ENCODE measurements at regions of chr2 and their contacts with region 1.

Region 1: DNA sequence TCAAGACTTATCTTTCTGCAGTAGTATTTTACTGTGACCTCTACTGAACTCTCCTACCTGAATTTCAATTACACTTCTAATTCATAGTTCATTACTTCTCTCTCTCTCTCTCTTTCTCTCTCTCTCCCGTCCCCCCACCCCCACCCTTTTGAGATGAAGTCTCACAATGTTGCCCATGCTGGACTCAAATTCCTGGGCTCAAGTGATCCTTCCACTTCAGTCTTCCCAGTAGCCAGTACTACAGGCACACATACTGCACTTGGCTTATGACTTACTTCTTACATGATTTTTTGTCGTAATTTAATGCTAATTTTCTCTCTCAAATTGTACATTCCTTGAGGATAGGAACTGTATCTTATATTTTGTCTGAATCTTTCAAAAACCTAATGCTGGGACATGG is 6.0 kb upstream of the HIBCH start:
- DNase-seq: no peak

Region 2: DNA sequence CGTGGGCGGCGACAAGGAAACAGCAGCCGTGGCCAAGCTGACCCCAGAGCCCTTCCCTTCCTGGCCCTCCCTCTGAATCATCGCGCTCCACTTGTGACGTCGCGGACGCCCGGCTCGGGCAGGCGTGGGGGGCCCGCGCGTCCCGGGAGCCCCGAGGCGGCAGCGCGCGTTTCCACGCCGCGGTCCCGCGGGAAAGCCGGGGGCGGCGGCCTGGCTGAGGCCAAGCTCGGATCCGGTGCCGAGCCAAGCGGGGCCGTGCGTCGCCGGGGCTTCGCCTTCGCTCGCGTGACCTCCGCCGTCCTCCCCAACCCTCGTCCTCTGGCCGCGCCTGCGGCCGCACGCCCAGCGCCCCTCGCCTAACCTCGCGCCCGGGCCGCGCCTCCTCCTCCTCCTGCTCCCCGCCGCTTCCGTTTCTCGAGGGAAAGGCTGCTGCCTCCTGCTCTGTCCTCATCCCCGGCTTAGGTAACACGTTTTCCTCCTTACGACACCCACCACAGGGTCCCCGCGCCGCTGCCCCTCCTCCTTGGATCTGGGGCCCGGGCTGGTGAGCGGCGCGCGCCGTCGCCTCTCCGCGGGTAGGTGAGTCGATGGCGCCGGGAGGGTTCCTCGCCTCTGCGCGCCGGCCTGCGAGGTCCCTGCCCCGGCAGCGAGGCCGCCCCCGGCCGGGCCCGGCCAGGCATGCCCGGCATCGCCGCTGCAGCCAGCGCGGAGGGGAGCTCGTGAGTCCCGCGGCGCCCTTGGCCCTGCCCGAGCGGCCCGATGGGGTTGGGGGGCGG is 18.1 kb after region 1 on chr2 and contains the start of gene INPP1:
- intact Hi-C with region 1: no loop called
- DNase-seq: peak; percentile 93
- total RNA-seq, gene INPP1: 20.1 to 23.4 TPM

Region 3: GRCh38 chr2:190365499-190366204 is 40.1 kb after region 1 on chr2:
- intact Hi-C with region 1: loop called in 1 of 2 experiments (anchors 2 kb)
- DNase-seq: no peak

Measured in posterior vena cava (tissue), 2 donors.